ENCODE measurements at regions of chr10 and their contacts with region 1.

Region 1: DNA sequence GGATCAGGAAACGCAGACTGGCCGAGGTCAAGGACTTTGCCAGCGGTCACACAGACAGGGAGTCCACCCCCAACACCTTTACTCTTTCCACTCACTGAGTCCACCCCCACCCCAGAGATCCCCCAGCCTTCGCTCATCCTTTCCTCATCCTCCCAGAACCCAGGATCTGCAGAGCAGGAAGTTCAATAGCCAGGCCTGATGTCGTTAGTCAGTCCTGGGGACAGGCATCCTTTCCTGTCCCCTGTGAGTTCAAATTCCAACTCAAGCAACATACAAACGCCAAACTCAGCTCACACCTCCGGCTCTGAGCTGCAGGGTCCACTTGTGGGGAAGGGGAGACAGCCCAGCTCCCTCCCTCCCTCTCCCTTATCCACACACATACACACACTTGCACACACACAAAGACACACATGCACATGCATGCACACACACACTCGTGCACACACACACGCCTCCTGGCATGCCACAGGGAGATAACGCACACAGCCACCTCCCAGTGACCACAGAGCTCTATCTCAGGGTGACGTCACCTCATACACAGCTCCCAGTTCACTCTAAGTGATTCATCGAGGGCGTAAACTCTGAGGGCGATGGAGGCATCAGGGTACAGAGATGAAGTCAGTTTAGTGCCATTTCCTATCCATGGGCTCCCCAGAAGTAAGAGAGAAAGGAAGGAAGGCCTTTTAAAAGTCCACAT is 23.9 kb downstream of the CALML3 start:
- DNase-seq: peak in 12 of 14 experiments; percentile 24 to 83 (median 56)
- ATAC-seq: peak; percentile 96
- H3K4me3 ChIP-seq: no peak overlapping the region
- H3K4me3 Mint-ChIP-seq: no peak overlapping the region
- H3K27ac ChIP-seq: no peak overlapping the region
- H3K27ac Mint-ChIP-seq: no peak overlapping the region
- H3K4me1 ChIP-seq: peaks cover 54% of the 10 kb centered on the region
- H3K4me1 Mint-ChIP-seq: no peaks in the 10 kb centered on the region
- H3K27me3 ChIP-seq: no peaks in the 10 kb centered on the region
- H3K27me3 Mint-ChIP-seq: no peaks in the 10 kb centered on the region
- CTCF ChIP-seq: no peak

Region 2: GRCh38 chr10:5479481-5480161 is 69.1 kb before region 1 on chr10:
- CTCF ChIA-PET with region 1: no interaction called
- POLR2A ChIA-PET with region 1: no interaction called
- intact Hi-C with region 1: no loop called
- DNase-seq: no peak
- ATAC-seq: no peak
- H3K4me3 ChIP-seq: no peak overlapping the region
- H3K4me3 Mint-ChIP-seq: no peak overlapping the region
- H3K27ac ChIP-seq: no peak overlapping the region
- H3K27ac Mint-ChIP-seq: no peak overlapping the region
- H3K4me1 ChIP-seq: no peaks in the 10 kb centered on the region
- H3K4me1 Mint-ChIP-seq: no peaks in the 10 kb centered on the region
- H3K27me3 ChIP-seq: no peaks in the 10 kb centered on the region
- H3K27me3 Mint-ChIP-seq: no peaks in the 10 kb centered on the region
- CTCF ChIP-seq: no peak

Region 3: GRCh38 chr10:5563991-5564536 is 15.4 kb after region 1 on chr10:
- CTCF ChIA-PET with region 1: interaction called, 3 read pairs
- POLR2A ChIA-PET with region 1: interaction called, 19 read pairs
- intact Hi-C with region 1: no loop called
- DNase-seq: peak; percentile 38 to 79 (median 67)
- ATAC-seq: peak; percentile 87
- H3K4me3 ChIP-seq: peak overlapping the region; percentile 39
- H3K4me3 Mint-ChIP-seq: peak overlapping the region; percentile 82
- H3K27ac ChIP-seq: peak overlapping the region; percentile 69 to 79
- H3K27ac Mint-ChIP-seq: peak overlapping the region; percentile 99
- H3K4me1 ChIP-seq: peaks cover 43% of the 10 kb centered on the region
- H3K4me1 Mint-ChIP-seq: peaks cover 50% of the 10 kb centered on the region
- H3K27me3 ChIP-seq: no peaks in the 10 kb centered on the region
- H3K27me3 Mint-ChIP-seq: no peaks in the 10 kb centered on the region
- CTCF ChIP-seq: no peak

Region 4: DNA sequence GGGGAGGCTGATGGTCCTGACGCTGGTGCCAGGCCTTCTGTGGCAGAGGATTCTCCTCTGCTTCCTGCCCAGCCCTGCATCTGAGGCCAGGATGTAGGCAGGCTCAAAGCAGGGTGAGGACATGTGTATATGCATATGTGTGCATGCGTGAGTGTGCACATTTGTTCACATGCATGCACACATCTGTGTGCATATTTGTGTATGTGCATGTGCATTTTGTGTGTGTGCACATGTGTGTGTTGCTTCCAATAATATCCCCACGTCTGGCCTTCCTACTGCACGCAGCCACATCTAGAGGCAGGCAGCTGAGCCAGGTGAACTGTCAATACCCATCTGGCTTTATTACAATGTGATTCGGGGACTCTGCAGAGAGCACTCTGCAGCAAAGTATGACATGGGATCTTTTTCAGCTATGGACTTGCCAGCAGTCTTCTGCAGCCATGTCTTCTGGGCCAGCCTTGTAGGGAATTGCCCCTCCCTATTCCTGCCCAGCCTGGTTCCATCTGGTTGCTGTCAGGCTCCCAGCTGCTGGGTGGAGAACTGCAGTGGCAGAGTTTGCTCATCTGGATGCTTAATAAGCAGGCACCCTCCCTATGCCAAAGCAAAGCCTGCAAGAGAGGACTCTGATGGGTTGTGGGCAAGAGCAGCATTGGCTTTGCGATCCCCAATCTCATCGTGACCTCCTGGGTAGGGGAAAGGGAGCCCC is 794.8 kb after region 1 on chr10:
- CTCF ChIA-PET with region 1: no interaction called
- POLR2A ChIA-PET with region 1: no interaction called
- intact Hi-C with region 1: no loop called
- DNase-seq: no peak
- ATAC-seq: no peak
- H3K4me3 ChIP-seq: no peak overlapping the region
- H3K4me3 Mint-ChIP-seq: peak overlapping the region; percentile 13
- H3K27ac ChIP-seq: no peak overlapping the region
- H3K27ac Mint-ChIP-seq: peak overlapping the region; percentile 55
- H3K4me1 ChIP-seq: peaks cover 29% of the 10 kb centered on the region
- H3K4me1 Mint-ChIP-seq: peaks cover 45% of the 10 kb centered on the region
- H3K27me3 ChIP-seq: no peaks in the 10 kb centered on the region
- H3K27me3 Mint-ChIP-seq: no peaks in the 10 kb centered on the region
- CTCF ChIP-seq: no peak

Measured in CD4-positive, alpha-beta T cell (primary cell).